HCT116 (cell line): ENCODE measurements at regions of chr17 and their contacts with region 1.

Region 1: GRCh38 chr17:29640413-29640812 is 17.7 kb upstream of the CORO6 start:
- DNase-seq: no peak
- ATAC-seq: no peak
- H3K4me3 ChIP-seq: no peak overlapping the region
- H3K27ac ChIP-seq: no peak overlapping the region
- H3K4me1 ChIP-seq: peaks cover 11 to 18% of the 10 kb centered on the region in 2 experiments
- H3K27me3 ChIP-seq: no peaks in the 10 kb centered on the region
- CTCF ChIP-seq: no peak
- POLR2A ChIP-seq: no peak
- RAD21 ChIP-seq: no peak

Region 2: GRCh38 chr17:29469276-29469675 is 171.1 kb before region 1 on chr17:
- CTCF ChIA-PET with region 1: no interaction called
- POLR2A ChIA-PET with region 1: no interaction called
- RAD21 ChIA-PET with region 1: no interaction called
- intact Hi-C with region 1: no loop called
- DNase-seq: no peak
- ATAC-seq: no peak
- H3K4me3 ChIP-seq: no peak overlapping the region
- H3K27ac ChIP-seq: no peak overlapping the region
- H3K4me1 ChIP-seq: no peaks in the 10 kb centered on the region
- H3K27me3 ChIP-seq: no peaks in the 10 kb centered on the region
- CTCF ChIP-seq: no peak
- POLR2A ChIP-seq: no peak
- RAD21 ChIP-seq: no peak

Region 3: DNA sequence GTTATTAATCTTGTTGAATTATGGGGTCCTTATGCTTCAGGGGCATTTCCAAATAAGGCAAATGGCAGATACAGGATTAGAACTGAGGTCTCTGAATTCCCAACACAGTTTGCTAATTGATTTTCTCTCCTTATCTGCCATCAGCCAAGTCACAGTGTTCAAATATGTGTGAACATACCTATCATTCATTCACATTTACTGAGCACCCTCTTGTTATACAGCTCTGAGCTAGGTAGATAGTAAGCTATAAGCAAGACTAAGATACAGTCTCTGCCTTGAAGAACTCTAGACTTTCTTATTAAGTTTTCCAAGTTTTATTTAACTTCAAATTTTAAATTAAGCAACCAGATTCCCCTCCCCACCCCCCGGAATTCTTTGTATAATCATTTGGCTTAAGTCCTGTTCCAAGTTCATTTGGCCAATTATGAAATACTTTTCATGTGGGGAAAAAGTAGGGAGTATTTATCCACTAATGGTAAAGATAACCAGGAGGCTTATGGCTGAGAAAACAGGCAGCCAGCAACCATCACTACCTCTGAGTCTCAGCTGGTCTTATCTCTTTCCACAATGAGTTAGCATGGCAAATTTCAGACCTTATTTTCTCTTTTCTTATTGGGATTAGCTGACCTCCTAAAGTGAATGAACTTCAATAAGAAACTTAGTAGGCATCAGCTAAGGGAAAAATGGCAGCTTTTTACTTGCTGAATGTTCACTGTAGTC is 13.7 kb after region 1 on chr17:
- CTCF ChIA-PET with region 1: interaction called, 10 read pairs
- POLR2A ChIA-PET with region 1: no interaction called
- RAD21 ChIA-PET with region 1: no interaction called
- intact Hi-C with region 1: no loop called
- DNase-seq: no peak
- ATAC-seq: no peak
- H3K4me3 ChIP-seq: no peak overlapping the region
- H3K27ac ChIP-seq: no peak overlapping the region
- H3K4me1 ChIP-seq: peaks cover 8 to 13% of the 10 kb centered on the region in 2 experiments; a peak in 3 of 4 replicates
- H3K27me3 ChIP-seq: no peaks in the 10 kb centered on the region
- CTCF ChIP-seq: no peak
- POLR2A ChIP-seq: no peak
- RAD21 ChIP-seq: no peak

Region 4: GRCh38 chr17:29789196-29790170 is 149.1 kb after region 1 on chr17:
- CTCF ChIA-PET with region 1: interaction called, 11 read pairs
- POLR2A ChIA-PET with region 1: no interaction called
- RAD21 ChIA-PET with region 1: interaction called in 1 of 2 experiments, 7 read pairs
- intact Hi-C with region 1: no loop called
- DNase-seq: no peak
- ATAC-seq: no peak
- H3K4me3 ChIP-seq: no peak overlapping the region
- H3K27ac ChIP-seq: no peak overlapping the region
- H3K4me1 ChIP-seq: peaks cover 10 to 19% of the 10 kb centered on the region in 2 experiments
- H3K27me3 ChIP-seq: no peaks in the 10 kb centered on the region
- CTCF ChIP-seq: no peak
- POLR2A ChIP-seq: no peak
- RAD21 ChIP-seq: no peak

Region 5: GRCh38 chr17:29918922-29919856 is 278.8 kb after region 1 on chr17:
- CTCF ChIA-PET with region 1: no interaction called
- POLR2A ChIA-PET with region 1: no interaction called
- RAD21 ChIA-PET with region 1: no interaction called
- intact Hi-C with region 1: no loop called
- DNase-seq: no peak
- ATAC-seq: no peak
- H3K4me3 ChIP-seq: no peak overlapping the region
- H3K27ac ChIP-seq: no peak overlapping the region; the same call in 1 of the 2 replicates
- H3K4me1 ChIP-seq: peaks cover 7 to 15% of the 10 kb centered on the region in 2 experiments; a peak in 3 of 4 replicates
- H3K27me3 ChIP-seq: no peaks in the 10 kb centered on the region
- CTCF ChIP-seq: no peak
- POLR2A ChIP-seq: no peak
- RAD21 ChIP-seq: no peak

Region 6: DNA sequence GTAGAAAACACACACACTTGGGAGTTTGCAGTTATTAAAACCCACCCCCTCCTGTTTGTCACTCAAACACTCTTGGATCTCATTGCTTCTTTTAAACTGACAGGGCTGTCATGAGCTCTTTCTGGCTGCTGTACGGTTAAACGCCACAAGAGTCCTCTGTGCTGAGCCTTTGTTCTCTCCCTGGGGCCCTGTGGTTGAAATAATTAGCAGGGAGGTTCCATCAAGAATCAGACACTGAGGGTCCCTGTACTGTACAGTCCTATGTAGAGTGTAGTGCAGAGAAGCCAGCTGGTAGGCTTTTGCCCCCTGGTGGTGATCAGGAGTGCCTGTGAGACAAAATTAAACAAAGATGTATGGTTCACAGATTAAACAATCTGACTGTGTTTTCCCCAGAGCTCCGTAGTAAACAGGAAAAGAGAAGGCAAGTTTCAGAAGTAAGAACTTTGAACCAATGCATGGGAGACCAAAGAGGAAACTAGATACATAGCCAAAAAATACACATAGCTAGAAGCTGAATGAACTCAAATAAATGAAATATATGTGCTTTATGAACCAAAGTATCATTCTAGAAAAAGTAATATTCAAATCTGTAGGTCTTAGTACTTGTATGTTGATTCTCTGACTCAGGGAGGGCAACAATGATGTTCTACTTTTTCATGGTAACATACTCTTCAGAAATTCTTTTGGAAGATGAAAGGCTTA is 291.0 kb after region 1 on chr17:
- CTCF ChIA-PET with region 1: interaction called, 95 read pairs
- POLR2A ChIA-PET with region 1: interaction called, 4 read pairs
- RAD21 ChIA-PET with region 1: interaction called, 14 to 18 read pairs
- intact Hi-C with region 1: loop called (anchors 1 kb)
- DNase-seq: peak; percentile 82
- ATAC-seq: peak; percentile 61
- H3K4me3 ChIP-seq: peak overlapping the region; percentile 74 to 92
- H3K27ac ChIP-seq: no peak overlapping the region; the same call in 1 of the 2 replicates
- H3K4me1 ChIP-seq: peaks cover 13 to 23% of the 10 kb centered on the region in 2 experiments
- H3K27me3 ChIP-seq: no peaks in the 10 kb centered on the region
- CTCF ChIP-seq: peak; percentile 91 to 97 (median 92)
- POLR2A ChIP-seq: no peak
- RAD21 ChIP-seq: peak; percentile 93

Region 7: DNA sequence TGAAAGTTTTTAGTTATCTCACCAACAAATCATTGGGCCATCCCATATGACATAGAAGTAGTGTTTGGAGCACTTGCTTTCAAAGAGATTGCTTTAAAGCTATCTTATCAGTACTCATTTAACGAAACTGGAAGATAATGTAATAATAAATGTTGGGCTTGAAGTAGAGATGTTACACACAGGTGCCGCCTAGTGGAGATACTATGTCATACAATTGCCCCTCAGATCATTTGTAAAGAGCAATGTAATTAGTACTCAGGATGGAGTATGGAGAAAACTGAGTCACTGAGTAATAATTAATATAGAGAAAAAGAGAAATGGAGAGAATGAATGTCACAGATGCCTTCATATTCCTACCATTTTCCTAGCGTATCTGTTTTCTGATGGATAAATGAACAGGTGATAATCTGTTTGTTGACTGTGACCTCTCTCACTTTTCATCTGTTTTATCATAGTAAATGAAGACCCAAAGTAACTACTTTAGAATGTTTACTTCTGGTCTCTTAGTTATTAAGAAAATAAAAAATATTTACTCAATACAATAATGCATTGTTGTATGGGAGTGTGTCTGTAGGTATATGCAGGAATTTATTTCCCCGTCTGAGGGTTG is 381.4 kb after region 1 on chr17:
- CTCF ChIA-PET with region 1: interaction called, 18 read pairs
- POLR2A ChIA-PET with region 1: no interaction called
- RAD21 ChIA-PET with region 1: interaction called in 1 of 2 experiments, 4 read pairs
- intact Hi-C with region 1: loop called (anchors 5 kb)
- DNase-seq: peak; percentile 37
- ATAC-seq: peak; percentile 80
- H3K4me3 ChIP-seq: no peak overlapping the region
- H3K27ac ChIP-seq: no peak overlapping the region
- H3K4me1 ChIP-seq: no peaks in the 10 kb centered on the region
- H3K27me3 ChIP-seq: no peaks in the 10 kb centered on the region
- CTCF ChIP-seq: peak; percentile 72 to 85 (median 80); a peak in 5 of 6 replicates
- POLR2A ChIP-seq: no peak
- RAD21 ChIP-seq: peak; percentile 70

Region 8: DNA sequence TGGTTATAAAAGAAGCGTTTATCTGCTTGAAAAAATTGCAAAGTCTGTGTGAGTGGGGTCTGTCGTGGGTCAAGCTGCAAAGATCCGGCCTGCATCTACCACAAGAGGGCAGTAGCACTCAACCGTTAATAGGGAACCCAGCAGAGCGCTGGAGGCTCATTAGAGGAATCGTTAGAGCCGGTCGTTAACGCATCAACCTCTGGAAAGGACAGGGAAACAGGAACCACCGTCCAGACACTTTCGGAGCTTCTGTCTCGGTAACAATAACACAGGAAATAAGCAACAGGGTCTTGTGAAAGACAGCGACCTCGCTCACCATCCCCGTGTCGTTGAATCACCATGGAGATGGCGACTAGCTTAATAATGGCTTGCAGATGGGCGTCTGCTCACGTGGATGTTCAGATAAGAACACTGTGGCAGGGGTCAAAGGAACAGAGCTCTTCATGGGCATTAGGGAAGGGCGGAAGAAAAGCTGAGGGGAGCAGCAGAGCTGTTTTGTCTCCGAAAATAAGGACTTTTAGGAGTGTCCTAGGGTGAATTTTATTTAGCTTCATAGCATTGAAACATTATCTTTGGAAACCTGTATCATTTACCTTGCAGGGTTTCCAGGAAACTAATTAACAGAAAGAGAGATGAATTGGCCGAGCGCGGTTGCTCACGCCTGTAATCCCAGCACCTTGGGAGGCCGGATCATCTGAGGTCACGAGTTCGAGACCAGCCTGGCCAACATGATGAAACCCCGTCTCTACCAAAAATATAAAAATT is 464.3 kb after region 1 on chr17:
- CTCF ChIA-PET with region 1: interaction called, 11 read pairs
- POLR2A ChIA-PET with region 1: no interaction called
- RAD21 ChIA-PET with region 1: no interaction called
- intact Hi-C with region 1: no loop called
- DNase-seq: peak; percentile 76
- ATAC-seq: peak; percentile 99
- H3K4me3 ChIP-seq: peak overlapping the region; percentile 47 to 57
- H3K27ac ChIP-seq: no peak overlapping the region
- H3K4me1 ChIP-seq: peaks cover 3 to 7% of the 10 kb centered on the region in 2 experiments; a peak in 2 of 4 replicates
- H3K27me3 ChIP-seq: no peaks in the 10 kb centered on the region
- CTCF ChIP-seq: peak; percentile 88 to 96 (median 93); a peak in 5 of 6 replicates
- POLR2A ChIP-seq: no peak
- RAD21 ChIP-seq: peak; percentile 90